ENCODE measurements at regions of chr19 and their contacts with region 1.

Region 1: GRCh38 chr19:4597975-4598671 is 38.6 kb upstream of the SEMA6B start:
- DNase-seq: peak; percentile 49 to 72 (median 64)
- H3K4me3 ChIP-seq: peak overlapping the region in 2 of 3 experiments; percentile 6 to 63
- H3K4me3 Mint-ChIP-seq: peak overlapping the region in 1 of 2 donors; percentile 77
- H3K27ac ChIP-seq: no peak overlapping the region
- H3K27ac Mint-ChIP-seq: peak overlapping the region in 4 of 7 donors; percentile 25 to 30 (median 28)
- H3K4me1 ChIP-seq: peaks cover 14 to 19% of the 10 kb centered on the region in 2 donors
- H3K4me1 Mint-ChIP-seq: peaks cover 17% of the 10 kb centered on the region
- H3K27me3 ChIP-seq: peaks cover 8 to 25% of the 10 kb centered on the region in 2 donors
- H3K27me3 Mint-ChIP-seq: peaks cover 39 to 61% (median 56%) of the 10 kb centered on the region in 3 donors
- CTCF ChIP-seq: no peak

Region 2: GRCh38 chr19:4633140-4633967 is 35.2 kb after region 1 on chr19:
- intact Hi-C with region 1: loop called (anchors 5 kb)
- DNase-seq: peak; percentile 92 to 96 (median 96)
- H3K4me3 ChIP-seq: peak overlapping the region in 1 of 3 experiments; percentile 21
- H3K4me3 Mint-ChIP-seq: peak overlapping the region; percentile 31 to 67
- H3K27ac ChIP-seq: peak overlapping the region; percentile 74 to 83
- H3K27ac Mint-ChIP-seq: peak overlapping the region; percentile 86 to 94 (median 89)
- H3K4me1 ChIP-seq: peaks cover 45 to 49% of the 10 kb centered on the region in 2 donors
- H3K4me1 Mint-ChIP-seq: peaks cover 46% of the 10 kb centered on the region
- H3K27me3 ChIP-seq: no peaks in the 10 kb centered on the region
- H3K27me3 Mint-ChIP-seq: peaks cover 1 to 16% (median 12%) of the 10 kb centered on the region in 3 donors
- CTCF ChIP-seq: peak; percentile 87